T-cell (primary cell): ENCODE measurements at regions of chr10 and their contacts with region 1.

Region 1: DNA sequence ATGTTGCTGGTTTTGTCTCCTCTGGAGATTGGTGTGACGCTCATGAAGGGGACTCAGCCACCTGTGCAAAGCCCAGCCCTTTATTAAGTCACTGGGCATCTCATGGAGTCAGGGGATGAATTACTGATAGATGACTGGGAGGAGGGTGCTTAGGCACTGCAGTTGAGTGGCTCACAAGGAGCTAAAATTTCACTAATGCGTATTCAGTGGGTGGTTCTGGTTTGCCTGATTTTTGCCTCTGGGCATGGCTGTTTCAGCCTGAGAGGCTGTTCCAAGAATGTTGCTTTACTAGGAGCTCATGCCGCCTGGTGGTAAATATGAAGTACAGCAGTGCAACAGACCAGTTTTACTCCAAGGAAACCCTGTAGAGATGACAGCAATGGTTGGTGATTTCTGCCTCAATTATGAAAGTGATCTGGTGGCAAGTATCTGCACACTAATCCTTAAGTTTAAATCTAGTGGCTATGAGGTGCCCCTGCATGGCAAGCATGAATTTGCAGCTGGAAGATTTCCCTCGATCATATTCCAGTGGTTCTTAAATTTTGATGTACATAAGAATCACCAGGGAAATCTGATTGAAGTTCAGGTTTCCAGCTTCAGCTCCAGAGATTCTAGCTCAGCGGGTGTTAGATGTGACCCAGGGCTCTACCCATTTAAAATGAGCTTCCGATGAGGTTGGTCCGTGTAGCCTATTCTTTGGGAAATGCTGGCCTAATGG is 19.9 kb downstream of the ACTA2 start:
- DNase-seq: peak in 28 of 35 experiments; percentile 5 to 70 (median 15)
- ATAC-seq: peak; percentile 69 to 80 (median 71)
- H3K4me3 ChIP-seq: no peak overlapping the region
- H3K4me3 Mint-ChIP-seq: no peak overlapping the region
- H3K27ac ChIP-seq: no peak overlapping the region
- H3K27ac Mint-ChIP-seq: peak overlapping the region in 1 of 2 donors; percentile 80
- H3K4me1 ChIP-seq: peaks cover 0 to 10% of the 10 kb centered on the region in 2 experiments
- H3K4me1 Mint-ChIP-seq: peaks cover 15 to 20% (median 17%) of the 10 kb centered on the region in 3 donors
- H3K27me3 ChIP-seq: no peaks in the 10 kb centered on the region
- H3K27me3 Mint-ChIP-seq: no peaks in the 10 kb centered on the region

Region 2: GRCh38 chr10:88835096-88835909 is 97.4 kb before region 1 on chr10:
- CTCF ChIA-PET with region 1: interaction called, 101 to 104 read pairs
- POLR2A ChIA-PET with region 1: interaction called in 1 of 2 experiments, 3 read pairs
- DNase-seq: peak; percentile 72 to 93 (median 83)
- ATAC-seq: peak; percentile 88 to 93 (median 90)
- H3K4me3 ChIP-seq: no peak overlapping the region
- H3K4me3 Mint-ChIP-seq: no peak overlapping the region
- H3K27ac ChIP-seq: no peak overlapping the region
- H3K27ac Mint-ChIP-seq: no peak overlapping the region
- H3K4me1 ChIP-seq: peaks cover 20 to 37% of the 10 kb centered on the region in 2 experiments
- H3K4me1 Mint-ChIP-seq: peaks cover 30 to 33% (median 31%) of the 10 kb centered on the region in 3 donors
- H3K27me3 ChIP-seq: no peaks in the 10 kb centered on the region
- H3K27me3 Mint-ChIP-seq: no peaks in the 10 kb centered on the region

Region 3: DNA sequence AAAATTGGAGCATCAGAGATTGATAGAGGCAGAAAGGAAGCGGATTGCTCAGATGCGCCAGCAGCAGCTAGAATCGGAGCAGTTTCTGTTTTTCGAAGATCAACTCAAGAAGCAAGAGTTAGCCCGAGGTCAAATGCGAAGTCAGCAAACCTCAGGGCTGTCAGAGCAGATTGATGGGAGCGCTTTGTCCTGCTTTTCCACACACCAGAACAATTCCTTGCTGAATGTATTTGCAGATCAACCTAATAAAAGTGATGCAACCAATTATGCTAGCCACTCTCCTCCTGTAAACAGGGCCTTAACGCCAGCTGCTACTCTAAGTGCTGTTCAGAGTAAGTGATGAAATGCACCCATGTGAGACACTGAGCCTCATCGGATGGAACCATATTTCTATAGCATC is 19.6 kb before region 1 on chr10:
- CTCF ChIA-PET with region 1: interaction called, 5 to 10 read pairs
- POLR2A ChIA-PET with region 1: no interaction called
- DNase-seq: no peak
- ATAC-seq: no peak
- H3K4me3 ChIP-seq: no peak overlapping the region
- H3K4me3 Mint-ChIP-seq: no peak overlapping the region
- H3K27ac ChIP-seq: no peak overlapping the region
- H3K27ac Mint-ChIP-seq: no peak overlapping the region
- H3K4me1 ChIP-seq: no peaks in the 10 kb centered on the region
- H3K4me1 Mint-ChIP-seq: peaks cover 2 to 15% (median 10%) of the 10 kb centered on the region in 3 donors
- H3K27me3 ChIP-seq: no peaks in the 10 kb centered on the region
- H3K27me3 Mint-ChIP-seq: no peaks in the 10 kb centered on the region

Region 4: DNA sequence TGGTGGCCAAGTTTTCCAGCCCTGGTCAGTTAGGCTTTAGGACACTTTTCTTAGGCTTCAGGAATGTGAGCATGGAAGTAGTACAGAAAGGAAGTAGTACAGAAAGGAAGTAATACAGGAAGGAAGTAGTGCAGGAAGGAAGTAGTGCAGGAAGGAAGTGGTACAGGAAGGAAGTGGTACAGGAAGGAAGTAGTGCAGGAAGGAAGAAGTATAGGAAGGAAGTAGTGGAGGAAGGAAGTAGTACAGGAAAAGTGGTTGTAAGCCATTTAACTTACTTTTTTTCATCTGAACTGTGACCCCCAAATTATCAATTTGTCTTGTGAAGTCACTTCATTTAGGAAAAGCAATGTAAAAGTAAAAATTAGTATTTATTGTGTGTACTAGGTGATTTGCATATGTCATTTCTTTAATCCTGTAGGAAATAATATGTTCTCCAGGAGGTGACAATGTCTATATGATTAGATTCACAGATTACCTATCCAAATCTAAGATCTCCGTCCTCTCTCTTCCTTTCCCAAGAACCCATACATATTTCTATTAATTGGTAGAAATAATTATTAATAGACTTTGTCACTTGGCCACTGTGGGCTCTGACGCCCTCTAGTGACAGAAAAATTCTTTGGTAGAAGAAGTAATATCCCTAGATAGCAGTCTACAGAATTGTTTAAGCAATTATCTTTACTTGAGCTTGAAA is 54.0 kb after region 1 on chr10:
- CTCF ChIA-PET with region 1: interaction called, 6 to 13 read pairs
- POLR2A ChIA-PET with region 1: interaction called in 1 of 2 experiments, 6 read pairs
- DNase-seq: peak in 1 of 35 experiments; percentile 58
- ATAC-seq: no peak
- H3K4me3 ChIP-seq: no peak overlapping the region
- H3K4me3 Mint-ChIP-seq: peak overlapping the region in 1 of 3 donors; percentile 31
- H3K27ac ChIP-seq: peak overlapping the region; percentile 27
- H3K27ac Mint-ChIP-seq: peak overlapping the region; percentile 9 to 89
- H3K4me1 ChIP-seq: peaks cover 8 to 18% of the 10 kb centered on the region in 2 experiments
- H3K4me1 Mint-ChIP-seq: peaks cover 52 to 59% (median 55%) of the 10 kb centered on the region in 3 donors
- H3K27me3 ChIP-seq: no peaks in the 10 kb centered on the region
- H3K27me3 Mint-ChIP-seq: no peaks in the 10 kb centered on the region

Region 5: DNA sequence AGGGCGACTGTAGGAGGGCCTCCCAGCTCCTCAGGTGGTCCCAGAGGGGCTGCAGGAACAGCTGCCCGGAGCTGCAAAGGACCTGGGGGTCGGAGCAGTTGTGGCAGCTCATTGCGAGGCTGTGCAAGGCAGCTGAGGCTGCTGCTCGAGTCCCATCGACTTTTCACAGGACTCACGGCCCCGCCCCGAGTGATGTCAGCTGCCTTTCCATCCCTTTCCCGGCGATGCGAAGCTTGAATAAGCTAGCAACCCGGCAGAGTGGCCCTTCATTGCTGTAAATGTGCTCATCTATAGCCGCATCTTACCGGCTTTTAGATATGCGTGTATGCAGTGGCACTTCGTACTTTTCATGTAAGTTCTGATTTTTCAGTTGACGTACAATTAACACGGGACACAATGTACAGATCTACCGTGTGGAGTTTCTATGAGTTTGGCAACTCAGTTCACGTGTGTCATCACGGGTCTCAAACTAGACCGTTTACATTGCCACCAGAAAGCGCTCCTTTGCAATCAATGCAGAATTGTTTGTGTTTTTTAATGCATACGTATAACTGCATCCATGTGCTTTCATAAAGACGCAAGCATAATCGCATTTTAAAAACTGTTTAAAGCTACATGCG is 274.6 kb after region 1 on chr10 and contains the start of gene CH25H:
- CTCF ChIA-PET with region 1: interaction called, 7 to 28 read pairs
- POLR2A ChIA-PET with region 1: interaction called in 1 of 2 experiments, 4 read pairs
- DNase-seq: peak in 23 of 35 experiments; percentile 3 to 62 (median 24)
- ATAC-seq: peak; percentile 47 to 66 (median 58)
- H3K4me3 ChIP-seq: peak within 1 kb of the TSS; percentile 53 to 84
- H3K4me3 Mint-ChIP-seq: peak within 1 kb of the TSS; percentile 76 to 84 (median 78)
- H3K27ac ChIP-seq: no peak within 1 kb of the TSS
- H3K27ac Mint-ChIP-seq: no peak within 1 kb of the TSS
- H3K4me1 ChIP-seq: peaks cover 10 to 21% of the 10 kb centered on the region in 2 experiments
- H3K4me1 Mint-ChIP-seq: peaks cover 15% of the 10 kb centered on the region in 3 donors
- H3K27me3 ChIP-seq: peaks cover 11 to 31% of the 10 kb centered on the region in 2 experiments
- H3K27me3 Mint-ChIP-seq: peaks cover 39 to 40% of the 10 kb centered on the region in 2 donors
- total RNA-seq, gene CH25H: 0.21 to 1.0 TPM in 2 of 5 donors, not detected in the others

Region 6: GRCh38 chr10:89414146-89414878 is 481.6 kb after region 1 on chr10 and contains the start of gene IFIT5:
- CTCF ChIA-PET with region 1: interaction called in 1 of 2 experiments, 3 read pairs
- POLR2A ChIA-PET with region 1: interaction called in 1 of 2 experiments, 10 read pairs
- DNase-seq: peak; percentile 44 to 80 (median 62)
- ATAC-seq: peak; percentile 82 to 85 (median 83)
- H3K4me3 ChIP-seq: peak within 1 kb of the TSS; percentile 88 to 98
- H3K4me3 Mint-ChIP-seq: peak within 1 kb of the TSS; percentile 90 to 97 (median 92)
- H3K27ac ChIP-seq: peak within 1 kb of the TSS; percentile 97
- H3K27ac Mint-ChIP-seq: peak within 1 kb of the TSS; percentile 96 to 98
- H3K4me1 ChIP-seq: peaks cover 12 to 37% of the 10 kb centered on the region in 2 experiments
- H3K4me1 Mint-ChIP-seq: peaks cover 57 to 65% (median 60%) of the 10 kb centered on the region in 3 donors
- H3K27me3 ChIP-seq: no peaks in the 10 kb centered on the region
- H3K27me3 Mint-ChIP-seq: no peaks in the 10 kb centered on the region
- total RNA-seq, gene IFIT5: 12.6 to 20.3 (median 18.5) TPM